ENCODE measurements at regions of chr1 and their contacts with region 1.

Region 1: DNA sequence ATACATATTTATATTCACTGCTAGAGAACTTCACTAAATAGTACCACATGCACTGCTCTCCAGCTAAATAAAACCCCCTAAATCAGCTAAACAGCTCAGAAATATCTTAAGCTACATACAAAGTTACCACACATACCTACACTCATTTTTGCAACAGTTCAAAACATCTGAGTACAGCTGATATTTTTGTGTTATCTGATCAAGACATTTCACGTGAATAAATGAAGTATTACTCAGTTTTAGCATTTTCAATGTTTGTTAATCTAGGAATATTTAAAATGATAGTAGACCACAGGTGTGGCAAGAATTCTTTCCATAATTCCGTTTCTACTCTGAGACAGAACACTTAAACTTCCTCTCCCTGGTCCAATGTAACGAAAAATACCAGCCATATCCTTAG is 20.8 kb downstream of the EVI5 start:
- DNase-seq: no peak
- H3K4me3 ChIP-seq: no peak overlapping the region
- H3K4me3 Mint-ChIP-seq: no peak overlapping the region
- H3K27ac Mint-ChIP-seq: no peak overlapping the region
- H3K4me1 ChIP-seq: no peaks in the 10 kb centered on the region
- H3K4me1 Mint-ChIP-seq: peaks cover 6% of the 10 kb centered on the region
- H3K27me3 ChIP-seq: no peaks in the 10 kb centered on the region
- H3K27me3 Mint-ChIP-seq: no peaks in the 10 kb centered on the region
- CTCF ChIP-seq: no peak

Region 2: GRCh38 chr1:92493139-92493538 is 271.0 kb before region 1 on chr1:
- CTCF ChIA-PET with region 1: no interaction called
- POLR2A ChIA-PET with region 1: interaction called, 13 read pairs
- intact Hi-C with region 1: no loop called
- DNase-seq: no peak
- H3K4me3 ChIP-seq: no peak overlapping the region
- H3K4me3 Mint-ChIP-seq: no peak overlapping the region
- H3K27ac Mint-ChIP-seq: no peak overlapping the region
- H3K4me1 ChIP-seq: no peaks in the 10 kb centered on the region
- H3K4me1 Mint-ChIP-seq: no peaks in the 10 kb centered on the region
- H3K27me3 ChIP-seq: no peaks in the 10 kb centered on the region
- H3K27me3 Mint-ChIP-seq: no peaks in the 10 kb centered on the region
- CTCF ChIP-seq: no peak